Gastrocnemius medialis (tissue), 4 donors: ENCODE measurements at regions of chr5 and their contacts with region 1.

Region 1: GRCh38 chr5:155943516-155944407 is 383.2 kb upstream of the SGCD start:
- DNase-seq: peak; percentile 25 to 58
- ATAC-seq: peak; percentile 86 to 95
- H3K4me3 ChIP-seq: no peak overlapping the region
- H3K27ac ChIP-seq: no peak overlapping the region
- H3K4me1 ChIP-seq: peaks cover 0 to 12% of the 10 kb centered on the region in 2 donors
- H3K27me3 ChIP-seq: no peaks in the 10 kb centered on the region
- CTCF ChIP-seq: peak; percentile 52 to 89 (median 68)
- POLR2A ChIP-seq: no peak

Region 2: GRCh38 chr5:156051972-156052371 is 108.2 kb after region 1 on chr5:
- in situ Hi-C with region 1: no loop called
- intact Hi-C with region 1: loop called (anchors 5 kb)
- DNase-seq: no peak
- ATAC-seq: no peak
- H3K4me3 ChIP-seq: no peak overlapping the region
- H3K27ac ChIP-seq: no peak overlapping the region
- H3K4me1 ChIP-seq: no peaks in the 10 kb centered on the region
- H3K27me3 ChIP-seq: no peaks in the 10 kb centered on the region
- CTCF ChIP-seq: peak in 1 of 5 experiments; percentile 13
- POLR2A ChIP-seq: no peak

Region 3: DNA sequence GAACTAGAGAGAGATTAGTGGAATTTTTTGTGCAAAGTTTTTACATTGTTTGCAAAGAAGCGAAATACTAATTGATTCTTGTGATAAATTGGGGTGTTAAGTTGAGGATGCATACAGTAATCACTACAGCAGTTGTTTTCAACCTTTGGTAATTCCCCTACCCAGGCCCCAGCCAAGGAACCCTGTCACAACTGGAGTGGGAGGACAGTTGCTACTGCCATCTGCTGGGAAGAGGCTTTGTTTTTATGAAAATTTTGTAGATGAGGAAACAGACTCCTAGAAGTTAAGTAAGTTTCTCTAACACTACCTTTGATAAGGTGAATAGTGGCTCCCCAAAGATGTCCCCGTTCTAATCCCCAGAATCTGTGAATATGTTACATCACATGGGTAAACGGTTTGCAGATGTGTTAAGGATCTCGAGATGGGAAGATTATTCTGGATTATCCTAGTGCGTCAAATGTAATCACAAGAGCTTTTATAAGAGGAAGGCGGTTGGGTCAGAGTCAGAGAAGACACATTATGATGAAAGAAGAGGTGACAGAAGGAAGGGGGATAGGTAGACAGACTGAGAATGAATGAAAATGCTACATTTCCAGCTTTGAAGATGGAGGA is 872.3 kb after region 1 on chr5:
- in situ Hi-C with region 1: loop called (anchors 5 to 10 kb)
- intact Hi-C with region 1: no loop called
- DNase-seq: no peak
- ATAC-seq: peak in 1 of 2 donors; percentile 60
- H3K4me3 ChIP-seq: no peak overlapping the region
- H3K27ac ChIP-seq: no peak overlapping the region
- H3K4me1 ChIP-seq: no peaks in the 10 kb centered on the region
- H3K27me3 ChIP-seq: no peaks in the 10 kb centered on the region
- CTCF ChIP-seq: peak in 4 of 5 experiments; percentile 24 to 55 (median 36)
- POLR2A ChIP-seq: no peak

Region 4: GRCh38 chr5:156824800-156825199 is 881.0 kb after region 1 on chr5:
- in situ Hi-C with region 1: loop called (anchors 5 to 10 kb)
- intact Hi-C with region 1: loop called (anchors 2 kb)
- DNase-seq: no peak
- ATAC-seq: peak in 1 of 2 donors; percentile 78
- H3K4me3 ChIP-seq: no peak overlapping the region
- H3K27ac ChIP-seq: no peak overlapping the region
- H3K4me1 ChIP-seq: no peaks in the 10 kb centered on the region
- H3K27me3 ChIP-seq: no peaks in the 10 kb centered on the region
- CTCF ChIP-seq: peak; percentile 33 to 50 (median 39)
- POLR2A ChIP-seq: no peak